IMR-90 (cell line): ENCODE measurements at regions of chr11 and their contacts with region 1.

Region 1: DNA sequence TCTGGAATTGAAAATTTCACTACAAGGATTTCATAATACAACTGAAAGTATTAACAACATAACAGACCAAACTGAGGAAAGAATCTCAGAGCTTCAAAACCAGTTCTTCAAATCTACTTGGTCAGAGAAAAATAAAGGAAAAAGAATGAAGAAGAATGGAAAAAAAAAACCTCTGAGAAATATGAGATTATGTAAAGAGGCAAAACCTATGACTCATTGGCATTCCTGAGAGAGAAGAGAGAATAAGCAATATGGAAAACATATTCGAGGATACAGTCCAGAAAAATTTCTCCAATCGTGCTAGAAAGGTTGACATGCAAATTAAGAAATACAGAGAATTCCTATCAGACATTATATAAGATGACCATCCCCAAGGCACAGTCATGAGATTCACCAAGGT is 23.4 kb upstream of the GPR83 start:
- DNase-seq: peak; percentile 41
- ATAC-seq: 0 out of 2 replicates have a peak, but pooled peaks have one; percentile 21
- H3K4me3 ChIP-seq: no peak overlapping the region
- H3K27ac ChIP-seq: no peak overlapping the region
- H3K4me1 ChIP-seq: peaks cover 3% of the 10 kb centered on the region; the same call in 1 of the 2 replicates
- H3K27me3 ChIP-seq: no peaks in the 10 kb centered on the region
- CTCF ChIP-seq: no peak
- POLR2A ChIP-seq: no peak
- RAD21 ChIP-seq: no peak

Region 2: DNA sequence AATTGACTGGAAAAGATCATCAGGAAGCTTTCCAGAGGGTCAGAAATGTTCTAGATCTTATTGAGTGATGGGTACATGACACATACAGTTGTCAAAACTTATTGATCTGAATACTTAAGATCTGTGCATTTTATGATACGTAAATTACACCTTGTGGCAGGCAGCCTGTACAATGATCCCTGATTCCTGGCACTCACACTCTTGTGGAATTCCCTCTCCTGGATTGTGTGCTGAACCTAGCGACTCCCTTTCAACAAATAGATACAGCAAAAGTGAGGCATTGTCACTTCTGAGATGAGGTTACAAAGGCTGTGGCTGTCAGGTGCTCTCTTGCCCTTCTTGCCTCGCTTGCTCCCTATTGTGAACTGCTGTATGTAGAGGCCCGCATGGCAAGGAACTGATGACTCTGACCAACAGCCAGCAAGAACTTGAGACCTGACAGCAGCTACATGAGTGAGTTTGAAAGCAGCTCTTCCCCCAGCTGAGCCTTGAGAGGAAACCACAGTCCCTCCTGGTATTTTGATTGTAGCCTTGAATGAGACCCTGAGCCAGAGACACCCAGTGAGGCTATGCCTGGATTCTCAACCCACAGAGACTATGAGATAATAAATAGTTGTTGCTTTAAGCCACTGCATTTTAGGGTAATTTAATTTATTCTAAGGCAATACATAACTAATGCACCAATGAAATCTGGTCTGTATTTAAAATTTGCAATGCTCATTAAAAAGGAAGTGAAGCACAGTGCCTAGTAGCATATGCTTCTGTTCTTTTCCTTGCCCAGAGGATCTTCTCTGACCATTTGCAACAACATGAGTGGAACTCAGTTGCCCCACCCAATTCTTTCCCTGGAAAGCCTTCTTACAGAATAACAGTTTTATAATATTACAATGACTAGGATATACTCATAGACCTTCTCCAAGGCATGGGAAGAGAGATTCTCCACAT is 180.8 kb before region 1 on chr11:
- CTCF ChIA-PET with region 1: no interaction called
- POLR2A ChIA-PET with region 1: no interaction called
- dilution Hi-C with region 1: no loop called
- in situ Hi-C with region 1: no loop called
- intact Hi-C with region 1: loop called (anchors 5 kb)
- DNase-seq: peak; percentile 8
- ATAC-seq: no peak
- H3K4me3 ChIP-seq: no peak overlapping the region
- H3K27ac ChIP-seq: no peak overlapping the region
- H3K4me1 ChIP-seq: no peaks in the 10 kb centered on the region
- H3K27me3 ChIP-seq: no peaks in the 10 kb centered on the region
- CTCF ChIP-seq: no peak
- POLR2A ChIP-seq: no peak
- RAD21 ChIP-seq: no peak